Activated CD4-positive, alpha-beta T cell treated with anti-CD3 and anti-CD28 coated beads for 36 hours (primary cell): ENCODE measurements at regions of chr15 and their contacts with region 1.

Region 1: DNA sequence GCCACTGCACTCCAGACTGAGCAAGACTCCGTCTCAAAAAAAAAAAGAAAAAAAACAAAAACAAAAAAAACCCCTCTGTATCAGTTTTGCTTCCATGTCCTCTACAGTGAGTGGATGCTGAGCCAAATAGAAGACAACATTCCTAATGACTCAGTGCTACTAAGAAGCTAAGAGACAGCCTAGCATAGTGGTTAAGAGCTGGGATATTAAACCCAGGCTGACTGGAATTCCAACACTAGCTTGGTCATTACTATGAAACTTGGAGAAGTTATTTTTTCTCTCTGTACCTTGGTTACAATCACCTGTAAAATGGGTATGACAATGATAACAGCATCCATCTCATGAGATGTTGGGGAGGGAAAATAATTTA is 60.9 kb upstream of the PYGO1 start:
- DNase-seq: no peak
- ATAC-seq: no peak
- H3K4me3 Mint-ChIP-seq: no peak overlapping the region
- H3K27ac Mint-ChIP-seq: no peak overlapping the region
- H3K4me1 Mint-ChIP-seq: peaks cover 4% of the 10 kb centered on the region
- H3K27me3 Mint-ChIP-seq: peaks cover 2% of the 10 kb centered on the region

Region 2: GRCh38 chr15:55108858-55109518 is 540.1 kb before region 1 on chr15:
- CTCF ChIA-PET with region 1: no interaction called
- POLR2A ChIA-PET with region 1: no interaction called
- intact Hi-C with region 1: no loop called
- DNase-seq: peak; percentile 78
- ATAC-seq: peak; percentile 36
- H3K4me3 Mint-ChIP-seq: no peak overlapping the region
- H3K27ac Mint-ChIP-seq: no peak overlapping the region
- H3K4me1 Mint-ChIP-seq: no peaks in the 10 kb centered on the region
- H3K27me3 Mint-ChIP-seq: no peaks in the 10 kb centered on the region

Region 3: GRCh38 chr15:55514414-55514850 is 134.6 kb before region 1 on chr15:
- CTCF ChIA-PET with region 1: no interaction called
- POLR2A ChIA-PET with region 1: no interaction called
- intact Hi-C with region 1: loop called in 1 of 2 experiments (anchors 5 kb)
- DNase-seq: no peak
- ATAC-seq: no peak
- H3K4me3 Mint-ChIP-seq: no peak overlapping the region
- H3K27ac Mint-ChIP-seq: no peak overlapping the region
- H3K4me1 Mint-ChIP-seq: no peaks in the 10 kb centered on the region
- H3K27me3 Mint-ChIP-seq: no peaks in the 10 kb centered on the region

Region 4: DNA sequence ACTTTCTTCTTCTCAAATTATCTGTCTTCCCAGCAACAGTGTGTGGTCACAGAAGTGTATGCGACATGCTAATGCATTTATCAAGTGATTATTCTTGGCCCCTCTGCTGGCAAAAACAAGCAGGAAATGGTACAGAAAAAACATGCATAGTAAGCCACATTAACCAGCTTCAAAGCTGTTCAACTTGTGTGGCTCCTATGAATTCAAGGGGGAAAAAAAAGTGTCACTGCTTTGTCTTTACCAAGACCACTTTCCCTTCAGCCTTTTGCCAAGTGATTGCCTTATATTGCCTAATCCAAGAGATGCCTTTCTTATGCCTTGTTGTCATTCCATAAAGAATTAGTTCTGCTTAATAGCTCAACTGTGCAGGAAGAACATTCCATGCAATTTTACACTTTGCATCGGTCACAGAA is 54.8 kb after region 1 on chr15:
- CTCF ChIA-PET with region 1: no interaction called
- POLR2A ChIA-PET with region 1: no interaction called
- intact Hi-C with region 1: no loop called
- DNase-seq: no peak
- ATAC-seq: no peak
- H3K4me3 Mint-ChIP-seq: no peak overlapping the region
- H3K27ac Mint-ChIP-seq: no peak overlapping the region
- H3K4me1 Mint-ChIP-seq: peaks cover 8% of the 10 kb centered on the region
- H3K27me3 Mint-ChIP-seq: peaks cover 5% of the 10 kb centered on the region

Region 5: GRCh38 chr15:55742927-55743728 is 94.1 kb after region 1 on chr15 and contains the start of gene PRTG:
- CTCF ChIA-PET with region 1: no interaction called
- POLR2A ChIA-PET with region 1: no interaction called
- intact Hi-C with region 1: no loop called
- DNase-seq: no peak
- ATAC-seq: peak; percentile 36
- H3K4me3 Mint-ChIP-seq: peak within 1 kb of the TSS; percentile 45
- H3K27ac Mint-ChIP-seq: no peak within 1 kb of the TSS
- H3K4me1 Mint-ChIP-seq: no peaks in the 10 kb centered on the region
- H3K27me3 Mint-ChIP-seq: peaks cover 30% of the 10 kb centered on the region
- total RNA-seq, gene PRTG: not detected

Region 6: GRCh38 chr15:55775316-55775715 is 126.3 kb after region 1 on chr15:
- CTCF ChIA-PET with region 1: interaction called, 5 read pairs
- POLR2A ChIA-PET with region 1: no interaction called
- intact Hi-C with region 1: loop called in 1 of 2 experiments (anchors 1 kb)
- DNase-seq: no peak
- ATAC-seq: no peak
- H3K4me3 Mint-ChIP-seq: no peak overlapping the region
- H3K27ac Mint-ChIP-seq: no peak overlapping the region
- H3K4me1 Mint-ChIP-seq: no peaks in the 10 kb centered on the region
- H3K27me3 Mint-ChIP-seq: peaks cover 11% of the 10 kb centered on the region

Region 7: GRCh38 chr15:55846116-55846707 is 197.2 kb after region 1 on chr15:
- CTCF ChIA-PET with region 1: interaction called, 15 read pairs
- POLR2A ChIA-PET with region 1: no interaction called
- intact Hi-C with region 1: loop called (anchors 1 kb)
- DNase-seq: peak; percentile 52
- ATAC-seq: peak; percentile 66
- H3K4me3 Mint-ChIP-seq: no peak overlapping the region
- H3K27ac Mint-ChIP-seq: no peak overlapping the region
- H3K4me1 Mint-ChIP-seq: no peaks in the 10 kb centered on the region
- H3K27me3 Mint-ChIP-seq: no peaks in the 10 kb centered on the region

Region 8: GRCh38 chr15:56052395-56053045 is 403.5 kb after region 1 on chr15:
- CTCF ChIA-PET with region 1: interaction called, 6 read pairs
- POLR2A ChIA-PET with region 1: no interaction called
- intact Hi-C with region 1: loop called in 1 of 2 experiments (anchors 1 kb)
- DNase-seq: peak; percentile 24
- ATAC-seq: peak; percentile 85
- H3K4me3 Mint-ChIP-seq: no peak overlapping the region
- H3K27ac Mint-ChIP-seq: no peak overlapping the region
- H3K4me1 Mint-ChIP-seq: peaks cover 3% of the 10 kb centered on the region
- H3K27me3 Mint-ChIP-seq: no peaks in the 10 kb centered on the region